ENCODE measurements at regions of chr20 and their contacts with region 1.

Region 1: GRCh38 chr20:48657475-48658470 is 170.0 kb downstream of the PREX1 start:
- DNase-seq: peak; percentile 85 to 89
- H3K4me3 ChIP-seq: no peak overlapping the region
- H3K4me3 Mint-ChIP-seq: no peak overlapping the region
- H3K27ac Mint-ChIP-seq: no peak overlapping the region
- H3K4me1 ChIP-seq: no peaks in the 10 kb centered on the region
- H3K4me1 Mint-ChIP-seq: peaks cover 6% of the 10 kb centered on the region
- H3K27me3 ChIP-seq: no peaks in the 10 kb centered on the region
- H3K27me3 Mint-ChIP-seq: no peaks in the 10 kb centered on the region
- CTCF ChIP-seq: peak; percentile 99 to 100

Region 2: DNA sequence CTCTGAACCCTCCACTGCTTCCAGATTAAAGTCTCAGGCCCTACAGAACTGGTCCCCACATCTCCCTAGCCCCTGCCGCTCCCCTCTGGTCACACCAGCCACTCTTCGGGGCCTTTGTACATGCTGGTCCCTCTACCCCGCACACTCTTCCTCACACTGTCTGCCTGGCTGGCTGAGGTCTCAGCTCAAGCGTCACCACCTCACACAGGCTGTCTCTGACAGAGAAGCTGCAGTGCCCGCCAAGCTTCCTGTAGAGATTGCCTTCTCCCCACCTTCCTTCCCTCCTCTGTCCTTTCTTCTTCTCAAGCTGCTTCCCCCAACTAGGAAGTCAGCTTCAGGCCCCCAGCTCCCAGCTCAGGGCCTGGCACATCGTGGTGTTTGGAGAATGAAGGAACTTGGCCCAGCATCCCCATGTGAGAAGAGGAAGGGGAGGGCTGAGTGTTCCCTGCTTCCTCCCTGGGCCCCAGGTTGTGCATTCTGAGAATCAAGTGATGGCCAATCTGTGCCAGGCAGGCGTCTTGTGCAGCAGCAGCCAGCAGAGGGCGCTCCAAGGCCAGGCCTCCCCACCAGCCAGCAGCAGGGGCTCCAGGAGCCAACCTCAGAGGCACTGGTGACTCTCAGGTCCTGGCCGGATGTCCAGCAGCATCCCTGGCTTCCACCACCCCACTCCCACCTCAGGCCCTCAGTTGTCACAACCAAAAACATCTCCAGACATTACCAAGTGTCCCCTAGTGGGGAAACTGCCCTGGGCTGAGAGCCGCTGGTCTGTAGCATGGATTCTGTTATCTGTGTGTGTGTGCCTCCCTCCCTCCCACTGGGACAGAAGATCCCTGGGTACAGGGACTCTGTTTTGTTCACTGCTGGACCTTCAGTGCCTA is 22.1 kb before region 1 on chr20:
- CTCF ChIA-PET with region 1: interaction called, 10 read pairs
- POLR2A ChIA-PET with region 1: no interaction called
- intact Hi-C with region 1: no loop called
- DNase-seq: peak; percentile 77 to 84
- H3K4me3 ChIP-seq: no peak overlapping the region
- H3K4me3 Mint-ChIP-seq: no peak overlapping the region
- H3K27ac Mint-ChIP-seq: no peak overlapping the region
- H3K4me1 ChIP-seq: no peaks in the 10 kb centered on the region
- H3K4me1 Mint-ChIP-seq: no peaks in the 10 kb centered on the region
- H3K27me3 ChIP-seq: no peaks in the 10 kb centered on the region; the same call in 1 of the 2 replicates
- H3K27me3 Mint-ChIP-seq: peaks cover 11% of the 10 kb centered on the region
- CTCF ChIP-seq: peak; percentile 94 to 99

Region 3: DNA sequence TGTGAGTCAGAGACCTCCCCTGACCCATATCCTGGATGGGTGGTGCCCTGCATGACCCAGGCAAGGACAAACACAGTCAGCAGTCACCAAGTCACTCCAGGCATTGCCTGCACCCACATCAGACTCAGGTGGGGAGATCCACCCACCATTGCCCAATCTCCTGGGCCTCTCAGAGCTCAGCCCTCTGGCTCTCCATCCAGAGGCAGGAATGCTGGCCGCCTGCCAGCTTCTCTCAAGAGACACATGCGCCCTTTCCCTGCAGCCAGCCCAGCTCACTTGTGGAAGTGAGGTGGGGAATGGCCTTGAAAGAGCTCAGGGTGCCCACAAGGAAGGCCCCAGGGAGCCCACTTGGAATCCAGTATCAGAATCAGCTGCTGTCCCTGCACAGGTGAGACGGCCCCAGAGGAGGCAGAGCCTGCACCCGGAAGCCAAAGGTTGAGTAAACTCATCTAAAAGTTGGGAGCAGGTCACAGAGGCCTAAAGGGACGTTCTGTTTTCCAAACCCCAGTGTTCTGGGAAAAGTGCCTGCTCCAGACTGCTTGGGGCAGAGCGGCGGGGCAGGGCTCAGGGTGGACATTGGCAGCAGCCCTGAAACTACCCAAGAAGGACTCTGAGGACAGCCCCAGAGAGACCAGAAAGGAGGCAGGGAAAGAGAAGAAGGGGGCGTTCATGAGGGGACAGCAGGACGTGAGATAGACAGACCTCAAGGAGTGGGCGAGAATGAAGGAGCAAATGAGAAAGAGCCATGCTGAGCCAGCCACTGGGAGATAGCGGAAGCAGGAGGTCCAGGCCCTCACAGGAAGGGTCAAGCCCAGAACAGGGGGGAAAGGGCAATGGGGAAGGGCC is 40.3 kb after region 1 on chr20:
- CTCF ChIA-PET with region 1: interaction called, 13 read pairs
- POLR2A ChIA-PET with region 1: no interaction called
- intact Hi-C with region 1: no loop called
- DNase-seq: peak; percentile 72 to 81
- H3K4me3 ChIP-seq: no peak overlapping the region
- H3K4me3 Mint-ChIP-seq: no peak overlapping the region
- H3K27ac Mint-ChIP-seq: peak overlapping the region; percentile 1
- H3K4me1 ChIP-seq: peaks cover 22% of the 10 kb centered on the region
- H3K4me1 Mint-ChIP-seq: peaks cover 15% of the 10 kb centered on the region
- H3K27me3 ChIP-seq: no peaks in the 10 kb centered on the region
- H3K27me3 Mint-ChIP-seq: no peaks in the 10 kb centered on the region
- CTCF ChIP-seq: peak in 1 of 2 experiments; percentile 19

Region 4: DNA sequence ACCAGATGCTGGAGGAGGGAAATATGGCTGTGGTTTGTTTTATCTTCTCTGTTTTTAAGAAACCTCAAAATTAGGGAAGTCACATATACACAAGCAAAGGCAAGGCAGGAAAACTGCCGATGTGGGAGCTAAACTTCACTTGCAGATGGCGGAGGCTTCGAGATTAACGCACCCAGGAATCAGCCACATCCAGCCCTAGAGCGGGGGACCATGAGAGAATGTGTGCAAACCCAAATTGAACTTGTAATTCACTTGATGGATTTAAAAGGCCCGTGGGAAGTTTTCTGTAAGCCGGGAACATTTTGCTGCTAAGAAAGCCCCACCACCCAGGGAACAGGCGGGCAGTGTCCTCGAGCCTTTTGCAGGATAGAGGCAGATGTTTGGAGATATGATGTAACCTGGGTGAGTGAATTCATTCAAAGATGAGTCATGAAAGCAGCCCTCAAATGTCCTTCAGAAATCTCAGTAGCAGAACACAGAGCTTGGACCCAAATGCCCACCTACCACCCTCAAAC is 130.1 kb after region 1 on chr20:
- CTCF ChIA-PET with region 1: interaction called, 11 read pairs
- POLR2A ChIA-PET with region 1: no interaction called
- intact Hi-C with region 1: loop called (anchors 5 kb)
- DNase-seq: no peak
- H3K4me3 ChIP-seq: no peak overlapping the region
- H3K4me3 Mint-ChIP-seq: no peak overlapping the region
- H3K27ac Mint-ChIP-seq: no peak overlapping the region
- H3K4me1 ChIP-seq: no peaks in the 10 kb centered on the region
- H3K4me1 Mint-ChIP-seq: no peaks in the 10 kb centered on the region
- H3K27me3 ChIP-seq: no peaks in the 10 kb centered on the region; the same call in 1 of the 2 replicates
- H3K27me3 Mint-ChIP-seq: peaks cover 23% of the 10 kb centered on the region
- CTCF ChIP-seq: no peak

Region 5: GRCh38 chr20:48875911-48876640 is 218.3 kb after region 1 on chr20:
- CTCF ChIA-PET with region 1: interaction called, 11 read pairs
- POLR2A ChIA-PET with region 1: no interaction called
- intact Hi-C with region 1: no loop called
- DNase-seq: peak in 1 of 2 experiments; percentile 29
- H3K4me3 ChIP-seq: no peak overlapping the region
- H3K4me3 Mint-ChIP-seq: no peak overlapping the region
- H3K27ac Mint-ChIP-seq: no peak overlapping the region
- H3K4me1 ChIP-seq: 0 out of 2 replicates have a peak, but pooled peaks cover 8% of the 10 kb centered on the region
- H3K4me1 Mint-ChIP-seq: peaks cover 12% of the 10 kb centered on the region
- H3K27me3 ChIP-seq: no peaks in the 10 kb centered on the region
- H3K27me3 Mint-ChIP-seq: no peaks in the 10 kb centered on the region
- CTCF ChIP-seq: no peak

Region 6: DNA sequence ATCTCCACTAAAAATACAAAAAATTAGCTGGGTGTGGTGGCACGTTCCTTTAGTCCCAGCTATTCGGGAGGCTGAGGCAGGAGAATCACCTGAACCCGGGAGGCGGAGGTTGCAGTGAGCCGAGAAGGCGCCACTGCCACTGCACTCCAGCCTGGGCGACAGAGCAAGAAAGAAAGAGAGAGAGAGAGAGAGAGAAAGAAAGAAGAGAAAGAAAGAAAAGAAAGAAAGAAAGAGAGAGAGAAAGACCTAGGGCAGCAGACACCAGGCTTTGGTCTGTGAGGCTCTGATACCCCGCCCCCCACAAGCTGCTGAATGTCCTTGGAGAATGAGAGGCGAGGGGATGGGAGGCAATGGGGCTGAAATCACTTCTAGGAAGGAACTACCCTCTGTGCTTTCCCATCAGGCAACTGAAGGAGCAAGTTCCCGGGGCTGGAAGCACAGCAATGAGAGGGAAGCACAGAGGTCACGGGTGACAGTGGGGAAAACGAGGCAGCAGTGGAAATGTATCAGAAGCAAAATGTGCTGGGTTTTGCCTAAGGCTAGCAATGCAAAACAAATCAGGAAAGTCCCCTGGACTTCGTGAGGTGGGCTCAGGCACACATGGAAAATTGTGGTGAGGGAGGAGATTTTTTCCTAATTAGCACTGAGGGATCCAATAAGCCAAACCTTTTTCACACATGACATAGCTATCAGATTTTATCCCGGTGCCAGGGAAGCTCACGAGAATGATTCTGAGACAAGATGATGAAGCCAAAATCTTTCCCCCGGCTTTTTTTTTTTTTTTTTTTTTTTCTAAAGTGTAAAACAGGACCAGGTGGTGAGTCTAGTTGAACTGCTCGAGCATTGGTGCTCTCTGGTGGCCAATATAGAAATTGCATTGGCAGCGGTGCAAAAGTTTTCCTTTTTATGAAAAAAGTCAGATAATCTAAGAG is 246.9 kb after region 1 on chr20:
- CTCF ChIA-PET with region 1: interaction called, 133 read pairs
- POLR2A ChIA-PET with region 1: no interaction called
- intact Hi-C with region 1: loop called (anchors 1 kb)
- DNase-seq: peak; percentile 75 to 86
- H3K4me3 ChIP-seq: no peak overlapping the region
- H3K4me3 Mint-ChIP-seq: no peak overlapping the region
- H3K27ac Mint-ChIP-seq: no peak overlapping the region
- H3K4me1 ChIP-seq: 0 out of 2 replicates have a peak, but pooled peaks cover 8% of the 10 kb centered on the region
- H3K4me1 Mint-ChIP-seq: peaks cover 9% of the 10 kb centered on the region
- H3K27me3 ChIP-seq: no peaks in the 10 kb centered on the region; the same call in 1 of the 2 replicates
- H3K27me3 Mint-ChIP-seq: peaks cover 15% of the 10 kb centered on the region
- CTCF ChIP-seq: peak; percentile 95 to 97

Region 7: GRCh38 chr20:48921151-48921898 is 263.6 kb after region 1 on chr20 and contains the start of gene ARFGEF2:
- CTCF ChIA-PET with region 1: interaction called, 11 read pairs
- POLR2A ChIA-PET with region 1: no interaction called
- intact Hi-C with region 1: no loop called
- DNase-seq: peak; percentile 97 to 100
- H3K4me3 ChIP-seq: peak within 1 kb of the TSS; percentile 86
- H3K4me3 Mint-ChIP-seq: peak within 1 kb of the TSS; percentile 84
- H3K27ac Mint-ChIP-seq: peak within 1 kb of the TSS; percentile 99
- H3K4me1 ChIP-seq: peaks cover 32% of the 10 kb centered on the region
- H3K4me1 Mint-ChIP-seq: peaks cover 30% of the 10 kb centered on the region
- H3K27me3 ChIP-seq: no peaks in the 10 kb centered on the region
- H3K27me3 Mint-ChIP-seq: no peaks in the 10 kb centered on the region
- CTCF ChIP-seq: peak; percentile 17 to 28
- total RNA-seq, gene ARFGEF2: 78.8 and 83.2 TPM in 2 replicates